MCF 10A (cell line): ENCODE measurements at regions of chr2 and their contacts with region 1.

Region 1: GRCh38 chr2:105521205-105521604 is 122.4 kb upstream of the FHL2 start:
- DNase-seq: peak; percentile 40
- H3K4me3 Mint-ChIP-seq: no peak overlapping the region
- H3K27ac Mint-ChIP-seq: no peak overlapping the region
- H3K4me1 Mint-ChIP-seq: no peaks in the 10 kb centered on the region
- H3K27me3 Mint-ChIP-seq: no peaks in the 10 kb centered on the region
- CTCF ChIP-seq: peak; percentile 57

Region 2: GRCh38 chr2:105294844-105295481 is 226.2 kb before region 1 on chr2:
- CTCF ChIA-PET with region 1: interaction called, 4 read pairs
- POLR2A ChIA-PET with region 1: no interaction called
- intact Hi-C with region 1: loop called (anchors 1 kb)
- DNase-seq: peak; percentile 60
- H3K4me3 Mint-ChIP-seq: no peak overlapping the region
- H3K27ac Mint-ChIP-seq: no peak overlapping the region
- H3K4me1 Mint-ChIP-seq: peaks cover 14% of the 10 kb centered on the region
- H3K27me3 Mint-ChIP-seq: no peaks in the 10 kb centered on the region
- CTCF ChIP-seq: peak; percentile 48

Region 3: GRCh38 chr2:105344704-105345345 is 176.4 kb before region 1 on chr2:
- CTCF ChIA-PET with region 1: interaction called, 81 read pairs
- POLR2A ChIA-PET with region 1: interaction called, 3 read pairs
- intact Hi-C with region 1: loop called (anchors 1 kb)
- DNase-seq: peak; percentile 58
- H3K4me3 Mint-ChIP-seq: no peak overlapping the region
- H3K27ac Mint-ChIP-seq: no peak overlapping the region
- H3K4me1 Mint-ChIP-seq: peaks cover 6% of the 10 kb centered on the region
- H3K27me3 Mint-ChIP-seq: no peaks in the 10 kb centered on the region
- CTCF ChIP-seq: peak; percentile 44

Region 4: DNA sequence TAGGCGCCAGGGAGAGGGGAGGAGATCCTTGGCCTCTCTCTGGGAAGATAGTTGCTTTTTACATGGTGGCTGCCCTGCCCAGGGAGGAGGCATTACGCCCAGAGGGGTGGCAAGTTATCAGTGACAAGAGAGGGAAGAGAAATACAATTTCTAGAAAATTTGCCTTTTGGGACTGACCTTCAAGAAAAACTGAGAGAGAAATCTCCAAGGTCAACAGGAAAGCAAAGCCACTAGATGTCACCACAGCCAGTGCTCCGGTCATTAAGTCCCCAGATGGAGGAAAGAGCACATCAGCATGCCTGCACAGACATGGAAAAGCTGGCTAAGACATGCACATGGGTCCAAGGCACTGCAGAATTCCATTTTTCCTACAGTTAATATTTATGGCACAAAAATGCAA is 143.4 kb before region 1 on chr2:
- CTCF ChIA-PET with region 1: interaction called, 13 read pairs
- POLR2A ChIA-PET with region 1: interaction called, 3 read pairs
- intact Hi-C with region 1: loop called (anchors 2 kb)
- DNase-seq: no peak
- H3K4me3 Mint-ChIP-seq: no peak overlapping the region
- H3K27ac Mint-ChIP-seq: no peak overlapping the region
- H3K4me1 Mint-ChIP-seq: peaks cover 10% of the 10 kb centered on the region
- H3K27me3 Mint-ChIP-seq: no peaks in the 10 kb centered on the region
- CTCF ChIP-seq: no peak

Region 5: GRCh38 chr2:105409717-105410116 is 111.5 kb before region 1 on chr2:
- CTCF ChIA-PET with region 1: interaction called, 18 read pairs
- POLR2A ChIA-PET with region 1: interaction called, 3 read pairs
- intact Hi-C with region 1: no loop called
- DNase-seq: peak; percentile 99
- H3K4me3 Mint-ChIP-seq: peak overlapping the region; percentile 36
- H3K27ac Mint-ChIP-seq: no peak overlapping the region
- H3K4me1 Mint-ChIP-seq: peaks cover 42% of the 10 kb centered on the region
- H3K27me3 Mint-ChIP-seq: no peaks in the 10 kb centered on the region
- CTCF ChIP-seq: no peak

Region 6: DNA sequence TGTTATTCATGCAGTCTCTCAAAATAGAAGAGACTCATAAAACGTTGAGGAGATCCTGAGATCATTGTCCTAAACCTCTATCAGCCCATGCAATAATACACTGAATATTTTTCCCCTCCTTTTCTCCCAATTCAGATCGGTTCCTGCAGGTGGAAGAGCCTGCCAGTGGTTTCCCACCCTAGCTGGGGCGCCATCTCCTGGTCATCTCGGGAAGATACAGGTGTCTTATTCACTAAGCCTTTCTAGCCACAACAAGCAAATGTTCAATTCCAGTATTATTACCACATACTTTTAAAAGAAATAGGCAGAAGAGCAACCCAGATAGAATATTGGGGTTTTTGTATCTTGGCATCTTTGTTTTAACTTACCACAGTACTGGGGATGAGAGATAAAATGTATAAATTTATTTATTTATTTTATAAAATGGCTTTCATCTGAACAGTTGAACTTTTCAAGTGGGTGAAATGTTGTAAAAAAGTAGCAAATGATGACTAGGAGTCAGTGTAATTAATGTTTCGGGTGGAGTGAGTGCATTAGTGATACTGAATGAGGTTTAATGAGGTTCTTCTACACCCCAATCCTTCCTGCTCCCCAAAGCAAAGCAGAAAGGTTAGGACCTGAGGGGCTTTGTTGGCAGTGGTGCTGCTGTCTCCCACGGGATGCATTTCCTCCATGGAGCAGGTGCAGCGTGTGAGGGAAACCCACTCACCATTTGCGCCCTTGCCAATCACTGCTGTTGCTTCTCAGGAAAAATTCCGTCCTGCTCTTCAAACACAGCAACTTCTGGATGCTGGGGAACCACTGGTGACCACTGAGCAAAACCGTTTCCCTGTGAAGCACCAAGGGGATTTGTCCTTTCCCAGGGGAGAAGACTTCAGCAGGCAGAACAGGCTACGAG is 24.8 kb after region 1 on chr2:
- CTCF ChIA-PET with region 1: interaction called, 14 read pairs
- POLR2A ChIA-PET with region 1: no interaction called
- intact Hi-C with region 1: no loop called
- DNase-seq: peak; percentile 86
- H3K4me3 Mint-ChIP-seq: no peak overlapping the region
- H3K27ac Mint-ChIP-seq: no peak overlapping the region
- H3K4me1 Mint-ChIP-seq: no peaks in the 10 kb centered on the region
- H3K27me3 Mint-ChIP-seq: peaks cover 68% of the 10 kb centered on the region
- CTCF ChIP-seq: peak; percentile 72

Region 7: DNA sequence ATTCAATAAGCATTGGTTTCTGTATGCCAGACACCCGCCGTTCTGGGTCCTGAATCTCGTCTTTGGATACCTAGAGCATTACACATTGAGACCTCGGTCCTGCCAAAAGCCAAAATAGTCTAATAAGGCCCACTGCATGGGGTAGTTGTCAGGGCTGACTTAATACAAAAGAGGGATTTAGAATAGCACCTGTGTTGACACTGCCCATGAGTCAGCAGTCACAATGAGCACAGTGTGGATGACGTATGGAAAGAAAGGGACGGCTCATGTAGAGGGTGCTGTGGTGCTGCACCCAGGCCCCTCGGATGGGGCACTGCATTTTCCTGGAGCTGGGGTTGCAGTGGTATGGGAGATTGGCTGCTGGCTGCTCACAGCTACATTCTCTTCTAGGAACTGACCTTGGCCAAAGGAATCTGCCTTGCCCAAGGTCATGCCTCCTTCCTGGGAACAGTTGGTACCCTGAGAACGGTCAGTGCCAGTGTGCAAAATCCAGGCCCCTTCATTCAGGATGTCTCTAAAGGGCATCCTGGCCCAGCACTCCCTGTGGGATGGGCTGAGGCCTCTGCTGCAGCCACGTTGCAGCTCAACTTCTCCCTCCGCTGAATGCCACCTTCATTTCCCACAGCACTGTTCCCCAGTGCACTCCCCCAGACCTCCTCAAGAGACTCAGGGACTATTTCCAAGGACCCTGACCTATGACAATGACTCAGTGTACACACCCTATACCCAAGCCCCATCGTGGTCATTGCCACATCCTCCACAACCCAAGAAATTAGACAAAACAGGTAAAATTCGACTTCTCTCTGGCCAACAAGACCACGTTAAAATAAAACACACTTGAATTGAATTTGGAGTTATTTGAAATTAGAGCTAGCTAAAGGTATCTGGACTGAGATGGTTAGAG is 96.8 kb after region 1 on chr2:
- CTCF ChIA-PET with region 1: no interaction called
- POLR2A ChIA-PET with region 1: no interaction called
- intact Hi-C with region 1: no loop called
- DNase-seq: peak; percentile 59
- H3K4me3 Mint-ChIP-seq: no peak overlapping the region
- H3K27ac Mint-ChIP-seq: no peak overlapping the region
- H3K4me1 Mint-ChIP-seq: peaks cover 7% of the 10 kb centered on the region
- H3K27me3 Mint-ChIP-seq: peaks cover 51% of the 10 kb centered on the region
- CTCF ChIP-seq: no peak